ENCODE measurements at regions of chr1 and their contacts with region 1.

Region 1: DNA sequence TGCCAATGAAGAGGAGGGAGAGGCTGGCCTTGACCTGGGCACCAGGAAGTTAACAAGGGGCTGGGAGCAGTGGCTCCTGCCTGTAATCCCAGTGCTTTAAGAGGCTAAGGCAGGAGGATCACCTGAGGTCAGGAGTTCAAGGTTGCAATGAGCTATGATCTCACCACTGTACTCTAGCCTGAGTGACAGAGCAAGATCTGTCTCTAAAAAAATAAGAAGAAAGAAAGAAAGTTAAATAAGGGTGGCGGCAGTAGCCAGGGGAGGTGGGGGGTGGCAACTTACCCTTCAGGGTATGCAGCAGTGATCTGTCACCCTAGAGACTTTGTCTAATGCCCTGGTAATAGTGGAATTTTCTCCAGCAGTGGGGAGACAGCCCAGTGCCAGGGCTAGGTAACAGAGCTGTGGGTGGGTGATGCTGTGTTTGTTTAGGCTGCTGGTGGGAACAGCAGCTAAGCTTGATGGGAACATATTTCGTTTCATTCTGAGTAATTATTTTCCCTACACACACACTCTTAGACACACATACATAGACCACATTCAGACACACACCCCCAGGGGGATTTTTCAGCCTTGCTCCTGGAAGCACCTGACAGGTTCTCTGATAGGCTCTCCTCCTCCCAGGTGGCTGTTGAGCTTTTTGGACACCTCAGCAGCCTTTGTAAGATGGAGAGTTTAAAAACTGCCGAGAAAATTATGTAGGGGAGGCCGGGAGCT is 11.3 kb upstream of the SYT6 start:
- DNase-seq: no peak
- H3K4me3 ChIP-seq: no peak overlapping the region
- H3K27ac ChIP-seq: no peak overlapping the region
- H3K4me1 ChIP-seq: no peaks in the 10 kb centered on the region
- H3K27me3 ChIP-seq: peaks cover 4% of the 10 kb centered on the region
- CTCF ChIP-seq: no peak
- EP300 ChIP-seq: no peak
- POLR2A ChIP-seq: no peak

Region 2: GRCh38 chr1:114062477-114063099 is 102.4 kb before region 1 on chr1:
- in situ Hi-C with region 1: no loop called
- intact Hi-C with region 1: no loop called
- DNase-seq: no peak
- H3K4me3 ChIP-seq: no peak overlapping the region
- H3K27ac ChIP-seq: no peak overlapping the region
- H3K4me1 ChIP-seq: no peaks in the 10 kb centered on the region
- H3K27me3 ChIP-seq: no peaks in the 10 kb centered on the region
- CTCF ChIP-seq: no peak
- EP300 ChIP-seq: no peak
- POLR2A ChIP-seq: no peak

Region 3: GRCh38 chr1:114203595-114204134 is 38.7 kb after region 1 on chr1:
- in situ Hi-C with region 1: no loop called
- intact Hi-C with region 1: loop called (anchors 1 kb)
- DNase-seq: no peak
- H3K4me3 ChIP-seq: no peak overlapping the region
- H3K27ac ChIP-seq: no peak overlapping the region
- H3K4me1 ChIP-seq: no peaks in the 10 kb centered on the region
- H3K27me3 ChIP-seq: peaks cover 15% of the 10 kb centered on the region
- CTCF ChIP-seq: no peak
- EP300 ChIP-seq: no peak
- POLR2A ChIP-seq: no peak

Region 4: GRCh38 chr1:114691061-114691460 is 526.1 kb after region 1 on chr1:
- in situ Hi-C with region 1: no loop called
- intact Hi-C with region 1: no loop called
- DNase-seq: no peak
- H3K4me3 ChIP-seq: no peak overlapping the region
- H3K27ac ChIP-seq: no peak overlapping the region
- H3K4me1 ChIP-seq: no peaks in the 10 kb centered on the region
- H3K27me3 ChIP-seq: peaks cover 7% of the 10 kb centered on the region
- CTCF ChIP-seq: no peak
- EP300 ChIP-seq: no peak
- POLR2A ChIP-seq: no peak